AG04450 (cell line): ENCODE measurements at regions of chr13 and their contacts with region 1.

Region 1: DNA sequence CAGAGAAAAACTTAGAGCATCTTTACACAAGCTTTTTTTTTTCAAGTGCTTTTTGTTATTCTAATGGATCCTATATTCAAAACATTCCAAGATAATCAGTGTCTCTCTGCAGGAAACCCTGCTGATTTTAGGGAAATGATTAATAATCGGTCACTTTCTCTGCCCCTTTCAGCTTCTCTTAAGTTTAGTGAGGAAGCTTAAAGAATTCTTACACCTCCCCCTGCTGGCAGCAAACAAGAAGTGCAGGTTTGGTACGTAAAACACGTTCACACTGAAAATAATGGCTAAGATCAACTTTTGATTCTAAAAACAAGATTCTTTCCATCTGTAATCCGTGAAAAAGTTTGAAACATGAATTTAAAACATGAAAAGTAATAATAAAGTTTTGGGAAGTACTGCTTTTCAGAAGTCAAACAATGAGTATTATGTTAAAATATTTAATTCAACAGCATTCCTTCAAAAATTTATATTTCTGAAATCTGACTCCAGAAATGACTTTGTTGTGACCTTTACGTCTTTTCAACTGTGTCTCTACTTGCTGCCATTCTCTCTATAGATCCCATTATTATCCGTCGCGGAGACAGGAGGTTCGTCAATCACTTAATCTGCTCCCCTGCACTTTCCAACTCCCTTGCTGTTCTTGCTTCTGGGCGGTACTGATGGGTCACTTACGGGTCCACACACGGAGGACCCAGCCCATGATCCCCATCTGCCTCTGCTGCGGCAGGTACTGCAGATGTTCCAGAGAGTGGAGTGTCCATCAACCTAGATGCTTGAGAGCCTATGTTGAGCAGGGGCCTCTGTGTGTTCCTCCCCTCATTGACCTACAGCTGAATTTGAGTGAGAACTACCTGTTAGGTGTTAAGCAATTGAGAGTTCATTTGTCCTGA is 203.1 kb upstream of the EDNRB start:
- DNase-seq: no peak
- H3K4me3 ChIP-seq: no peak overlapping the region
- H3K27ac ChIP-seq: no peak overlapping the region
- H3K27me3 ChIP-seq: peaks cover 3% of the 10 kb centered on the region
- CTCF ChIP-seq: peak; percentile 88

Region 2: GRCh38 chr13:77516342-77516789 is 605.3 kb before region 1 on chr13:
- CTCF ChIA-PET with region 1: no interaction called
- POLR2A ChIA-PET with region 1: no interaction called
- DNase-seq: no peak
- H3K4me3 ChIP-seq: no peak overlapping the region
- H3K27ac ChIP-seq: no peak overlapping the region
- H3K27me3 ChIP-seq: no peaks in the 10 kb centered on the region
- CTCF ChIP-seq: no peak

Region 3: DNA sequence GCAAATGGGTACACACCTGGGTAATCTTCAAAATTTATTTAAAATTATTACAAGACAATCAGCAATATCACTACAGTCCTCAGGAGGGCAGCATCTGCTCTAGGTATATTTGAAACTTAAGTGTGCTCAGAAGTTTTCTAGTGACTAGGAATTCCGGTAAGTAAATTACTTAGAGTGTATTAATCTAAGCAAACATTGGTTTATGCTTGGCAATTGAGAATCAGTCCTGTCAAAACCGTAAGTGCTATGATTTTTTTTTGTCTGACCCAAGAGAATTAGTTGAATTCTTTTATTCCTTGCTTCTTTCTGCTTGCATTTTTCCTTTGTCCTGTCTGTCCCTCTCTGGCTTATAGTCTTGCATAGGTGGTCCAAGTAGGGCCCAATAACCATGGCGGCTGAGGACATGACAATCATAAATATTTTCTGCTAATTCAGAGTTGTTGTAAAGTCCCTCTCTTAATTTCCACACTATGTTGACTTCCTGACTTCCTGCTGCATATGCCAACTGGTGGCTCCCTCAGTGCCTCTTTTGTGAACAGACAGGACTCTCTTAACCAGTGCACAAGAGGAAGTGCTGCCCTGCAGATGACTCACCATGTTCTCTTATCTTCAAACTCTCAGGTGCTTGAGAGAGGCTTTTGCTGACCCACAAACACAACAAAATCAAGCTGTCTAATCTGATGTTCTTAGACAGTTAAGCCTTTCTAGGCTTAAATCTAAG is 342.0 kb before region 1 on chr13:
- CTCF ChIA-PET with region 1: interaction called, 142 read pairs
- POLR2A ChIA-PET with region 1: no interaction called
- DNase-seq: peak; percentile 55
- H3K4me3 ChIP-seq: no peak overlapping the region
- H3K27ac ChIP-seq: no peak overlapping the region
- H3K27me3 ChIP-seq: no peaks in the 10 kb centered on the region
- CTCF ChIP-seq: peak; percentile 65

Region 4: DNA sequence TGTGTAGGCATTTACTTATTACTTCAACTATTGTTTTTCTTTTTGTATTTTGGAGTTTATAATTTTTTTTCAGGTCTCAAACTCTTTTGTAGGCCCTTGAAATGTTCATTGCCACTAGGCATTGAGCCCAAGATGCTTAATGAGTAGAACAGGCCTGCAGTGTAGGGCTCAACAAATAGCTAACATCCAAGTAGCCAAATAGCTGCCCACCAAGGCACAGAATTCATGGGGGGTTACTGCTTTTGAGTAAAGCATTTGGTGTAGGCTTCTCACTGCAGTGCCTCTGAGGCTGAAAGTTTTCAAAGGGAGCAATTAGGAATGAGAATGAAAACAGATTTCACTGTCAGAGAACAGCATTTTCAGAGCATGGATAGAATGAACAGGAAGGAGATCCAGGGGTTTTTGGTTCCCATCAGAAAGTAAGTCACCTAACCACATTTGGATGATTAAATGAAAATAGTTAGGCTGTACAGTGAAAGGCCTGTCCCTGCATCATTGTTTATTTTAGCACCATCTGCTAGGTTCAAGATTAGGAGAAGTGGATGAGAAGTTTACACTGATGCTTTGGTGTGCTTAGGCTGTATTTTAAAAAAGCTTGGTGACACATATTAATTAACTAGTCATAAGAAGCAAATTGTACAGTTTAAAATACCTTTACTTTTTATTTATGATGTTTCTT is 264.0 kb before region 1 on chr13:
- CTCF ChIA-PET with region 1: interaction called, 14 read pairs
- POLR2A ChIA-PET with region 1: no interaction called
- DNase-seq: no peak
- H3K4me3 ChIP-seq: no peak overlapping the region
- H3K27ac ChIP-seq: peak overlapping the region; percentile 68
- H3K27me3 ChIP-seq: no peaks in the 10 kb centered on the region
- CTCF ChIP-seq: no peak

Region 5: DNA sequence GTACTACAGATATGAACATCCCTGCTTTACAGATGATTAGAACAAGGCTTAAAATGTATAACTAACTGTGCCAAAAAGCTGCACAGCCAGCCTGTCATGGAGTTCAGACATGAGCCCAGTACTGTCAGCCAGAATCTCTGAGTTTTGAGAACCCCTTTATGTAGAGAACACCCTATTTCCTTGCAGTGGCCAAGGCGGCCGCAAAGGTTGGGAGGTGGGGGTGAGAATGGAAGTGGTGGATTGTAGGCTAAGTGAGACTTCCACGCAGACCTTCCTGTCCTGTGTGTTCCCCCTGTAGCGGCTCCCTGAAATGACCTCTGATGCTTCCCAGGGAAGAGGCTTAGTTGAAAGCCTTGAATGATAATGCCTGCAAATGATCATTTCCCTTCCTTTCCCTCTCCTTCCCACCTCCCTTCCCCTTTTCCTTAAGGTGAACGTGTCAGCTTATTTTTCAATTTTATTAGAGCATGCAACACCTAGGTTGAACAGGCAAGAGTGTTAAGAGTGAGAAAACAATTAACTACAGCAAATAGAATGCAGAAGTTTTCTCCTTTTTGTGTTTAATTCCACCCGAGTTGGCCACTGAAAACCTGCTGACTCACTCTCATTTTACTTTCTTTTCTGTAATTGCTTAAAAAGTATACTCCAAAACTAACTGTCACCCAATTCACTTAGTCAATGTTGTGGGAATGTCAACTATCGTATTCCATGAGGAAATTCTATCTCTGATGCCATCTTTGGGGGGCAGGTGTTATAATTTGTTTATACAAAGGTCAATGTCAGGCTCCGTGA is 36.1 kb before region 1 on chr13:
- CTCF ChIA-PET with region 1: interaction called, 16 read pairs
- POLR2A ChIA-PET with region 1: no interaction called
- DNase-seq: no peak
- H3K4me3 ChIP-seq: no peak overlapping the region
- H3K27ac ChIP-seq: no peak overlapping the region
- H3K27me3 ChIP-seq: no peaks in the 10 kb centered on the region
- CTCF ChIP-seq: no peak

Region 6: DNA sequence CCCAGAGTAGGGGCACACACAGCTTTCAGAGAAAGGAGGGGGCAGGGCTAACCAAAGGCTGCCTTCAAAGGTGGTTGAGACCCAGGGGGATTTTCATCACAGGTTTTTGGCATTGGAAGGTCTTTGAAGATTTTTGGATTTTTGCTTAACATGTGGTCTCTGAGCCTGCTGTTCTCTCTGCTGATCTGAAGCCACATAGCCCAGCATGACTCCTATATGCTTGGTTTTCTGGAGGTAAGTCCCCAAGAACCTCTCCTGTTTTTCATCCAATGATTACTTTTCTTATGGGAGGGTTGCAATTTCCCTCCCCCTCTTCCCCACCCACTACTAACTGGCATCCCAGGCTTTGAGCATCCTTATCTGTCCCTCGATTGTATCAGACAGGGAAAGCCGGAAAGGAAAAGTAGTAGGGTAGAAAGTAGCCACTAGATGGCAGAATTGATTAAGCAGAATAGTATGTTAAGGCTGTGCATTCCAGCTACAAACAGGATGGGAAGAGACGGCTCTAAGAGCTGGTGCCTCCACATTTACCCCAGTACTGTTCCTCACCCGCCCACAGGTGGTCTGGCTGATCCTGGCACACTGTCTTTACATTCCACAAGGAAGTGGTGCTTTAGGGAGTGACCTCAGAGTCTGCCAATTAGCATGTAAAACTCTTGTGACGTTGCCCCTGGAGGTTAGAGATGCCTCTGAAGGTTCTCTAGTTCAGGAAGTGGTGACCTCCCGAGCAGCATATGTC is 15.9 kb after region 1 on chr13:
- CTCF ChIA-PET with region 1: interaction called, 27 read pairs
- POLR2A ChIA-PET with region 1: no interaction called
- DNase-seq: peak; percentile 49
- H3K4me3 ChIP-seq: no peak overlapping the region
- H3K27ac ChIP-seq: no peak overlapping the region
- H3K27me3 ChIP-seq: no peaks in the 10 kb centered on the region
- CTCF ChIP-seq: peak; percentile 79

Region 7: DNA sequence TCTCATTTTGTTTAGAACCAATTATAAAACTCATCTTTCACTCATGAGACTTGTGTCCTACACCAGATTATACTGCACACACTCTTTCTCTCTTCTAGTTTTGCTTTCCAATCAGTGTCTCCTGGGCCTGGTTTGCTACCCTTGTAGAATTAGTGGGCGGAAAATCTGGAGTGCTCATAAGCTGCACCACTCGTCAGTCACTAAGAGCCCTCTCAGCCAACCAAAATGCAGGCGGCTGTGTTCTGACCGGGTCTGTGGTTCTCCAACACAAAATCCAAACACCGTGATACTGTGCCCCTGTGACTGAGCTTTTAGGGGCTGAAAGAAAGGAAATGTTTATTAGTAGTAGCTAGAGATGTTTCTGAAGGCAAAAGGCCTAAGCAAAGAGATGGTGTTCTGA is 621.0 kb after region 1 on chr13:
- CTCF ChIA-PET with region 1: no interaction called
- POLR2A ChIA-PET with region 1: no interaction called
- DNase-seq: no peak
- H3K4me3 ChIP-seq: no peak overlapping the region
- H3K27ac ChIP-seq: no peak overlapping the region
- H3K27me3 ChIP-seq: no peaks in the 10 kb centered on the region
- CTCF ChIP-seq: no peak